ENCODE measurements at regions of chr5 and their contacts with region 1.

Region 1: GRCh38 chr5:140547508-140548299 is at the start of gene EIF4EBP3:
- DNase-seq: peak; percentile 97 to 99
- H3K4me3 ChIP-seq: peak within 1 kb of the TSS; percentile 58 to 80
- H3K27ac ChIP-seq: peak within 1 kb of the TSS; percentile 93 to 99
- H3K4me1 ChIP-seq: peaks cover 13 to 28% (median 25%) of the 10 kb centered on the region in 4 donors
- H3K27me3 ChIP-seq: no peaks in the 10 kb centered on the region
- CTCF ChIP-seq: peak; percentile 69 to 93

Region 2: GRCh38 chr5:140357726-140358093 is 190.0 kb before region 1 on chr5:
- intact Hi-C with region 1: no loop called
- DNase-seq: peak; percentile 78 to 89
- H3K4me3 ChIP-seq: peak overlapping the region in 1 of 2 donors; percentile 37
- H3K27ac ChIP-seq: no peak overlapping the region
- H3K4me1 ChIP-seq: peaks cover 0 to 8% (median 2%) of the 10 kb centered on the region in 4 donors
- H3K27me3 ChIP-seq: no peaks in the 10 kb centered on the region
- CTCF ChIP-seq: peak; percentile 83 to 95

Region 3: GRCh38 chr5:140647042-140647341 is 99.3 kb after region 1 on chr5:
- intact Hi-C with region 1: loop called (anchors 5 kb)
- DNase-seq: no peak
- H3K4me3 ChIP-seq: peak overlapping the region; percentile 80 to 93
- H3K27ac ChIP-seq: peak overlapping the region; percentile 84 to 86
- H3K4me1 ChIP-seq: peaks cover 0 to 51% (median 25%) of the 10 kb centered on the region in 4 donors
- H3K27me3 ChIP-seq: no peaks in the 10 kb centered on the region
- CTCF ChIP-seq: no peak

Region 4: GRCh38 chr5:140690941-140691924 is 143.5 kb after region 1 on chr5 and contains the starts of genes HARS1 and HARS2:
- intact Hi-C with region 1: loop called (anchors 10 kb)
- DNase-seq: peak; percentile 89 to 95
- H3K4me3 ChIP-seq: peak within 1 kb of the TSS; percentile 88 to 95
- H3K27ac ChIP-seq: peak within 1 kb of the TSS; percentile 87 to 94
- H3K4me1 ChIP-seq: peaks cover 0 to 35% (median 25%) of the 10 kb centered on the region in 4 donors
- H3K27me3 ChIP-seq: no peaks in the 10 kb centered on the region
- CTCF ChIP-seq: no peak

Measured in tibial artery (tissue), 4 donors.